ENCODE measurements at regions of chr1 and their contacts with region 1.

Region 1: GRCh38 chr1:193406901-193407300 is 220.5 kb upstream of the B3GALT2 start:
- DNase-seq: peak; percentile 70
- H3K4me3 Mint-ChIP-seq: no peak overlapping the region
- H3K27ac Mint-ChIP-seq: no peak overlapping the region
- H3K4me1 Mint-ChIP-seq: peaks cover 23% of the 10 kb centered on the region
- H3K27me3 Mint-ChIP-seq: no peaks in the 10 kb centered on the region

Region 2: DNA sequence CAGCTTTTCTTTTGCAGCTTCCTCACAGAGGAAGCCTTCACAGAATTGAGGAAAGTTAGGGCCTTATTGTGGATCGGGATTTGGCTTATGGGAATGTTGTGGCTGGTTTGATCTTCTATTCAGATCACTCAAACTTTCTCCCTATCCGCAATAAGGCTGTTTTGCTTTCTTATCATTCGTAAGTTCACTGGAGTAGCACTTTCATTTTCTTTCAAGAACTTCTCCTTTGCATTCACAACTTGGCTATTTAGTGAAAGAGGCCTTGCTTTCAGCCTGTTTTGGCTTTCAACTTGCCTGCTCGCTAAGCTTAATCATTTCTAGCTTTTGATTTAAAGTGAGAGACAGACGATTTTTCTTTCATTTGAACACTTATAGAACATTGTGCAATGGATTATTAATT is 38.6 kb before region 1 on chr1:
- intact Hi-C with region 1: no loop called
- DNase-seq: no peak
- H3K4me3 Mint-ChIP-seq: peak overlapping the region; percentile 56
- H3K27ac Mint-ChIP-seq: no peak overlapping the region
- H3K4me1 Mint-ChIP-seq: peaks cover 4% of the 10 kb centered on the region
- H3K27me3 Mint-ChIP-seq: peaks cover 6% of the 10 kb centered on the region

Region 3: GRCh38 chr1:193569096-193569982 is 162.4 kb after region 1 on chr1:
- intact Hi-C with region 1: loop called (anchors 1 kb)
- DNase-seq: peak; percentile 78
- H3K4me3 Mint-ChIP-seq: peak overlapping the region; percentile 4
- H3K27ac Mint-ChIP-seq: peak overlapping the region; percentile 84
- H3K4me1 Mint-ChIP-seq: peaks cover 20% of the 10 kb centered on the region
- H3K27me3 Mint-ChIP-seq: no peaks in the 10 kb centered on the region